CD4-positive, alpha-beta memory T cell (primary cell): ENCODE measurements at regions of chr5 and their contacts with region 1.

Region 1: GRCh38 chr5:149035372-149035790 is 27.5 kb downstream of the SH3TC2 start:
- DNase-seq: peak; percentile 55 to 66 (median 57)
- H3K4me3 ChIP-seq: no peak overlapping the region
- H3K4me3 Mint-ChIP-seq: peak overlapping the region in 1 of 8 donors; percentile 22
- H3K27ac ChIP-seq: no peak overlapping the region
- H3K27ac Mint-ChIP-seq: peak overlapping the region in 1 of 7 donors; percentile 27
- H3K4me1 ChIP-seq: peaks cover 10% of the 10 kb centered on the region
- H3K4me1 Mint-ChIP-seq: peaks cover 3 to 38% (median 19%) of the 10 kb centered on the region in 4 donors
- H3K27me3 ChIP-seq: no peaks in the 10 kb centered on the region
- H3K27me3 Mint-ChIP-seq: peaks cover 0 to 3% of the 10 kb centered on the region in 2 donors

Region 2: DNA sequence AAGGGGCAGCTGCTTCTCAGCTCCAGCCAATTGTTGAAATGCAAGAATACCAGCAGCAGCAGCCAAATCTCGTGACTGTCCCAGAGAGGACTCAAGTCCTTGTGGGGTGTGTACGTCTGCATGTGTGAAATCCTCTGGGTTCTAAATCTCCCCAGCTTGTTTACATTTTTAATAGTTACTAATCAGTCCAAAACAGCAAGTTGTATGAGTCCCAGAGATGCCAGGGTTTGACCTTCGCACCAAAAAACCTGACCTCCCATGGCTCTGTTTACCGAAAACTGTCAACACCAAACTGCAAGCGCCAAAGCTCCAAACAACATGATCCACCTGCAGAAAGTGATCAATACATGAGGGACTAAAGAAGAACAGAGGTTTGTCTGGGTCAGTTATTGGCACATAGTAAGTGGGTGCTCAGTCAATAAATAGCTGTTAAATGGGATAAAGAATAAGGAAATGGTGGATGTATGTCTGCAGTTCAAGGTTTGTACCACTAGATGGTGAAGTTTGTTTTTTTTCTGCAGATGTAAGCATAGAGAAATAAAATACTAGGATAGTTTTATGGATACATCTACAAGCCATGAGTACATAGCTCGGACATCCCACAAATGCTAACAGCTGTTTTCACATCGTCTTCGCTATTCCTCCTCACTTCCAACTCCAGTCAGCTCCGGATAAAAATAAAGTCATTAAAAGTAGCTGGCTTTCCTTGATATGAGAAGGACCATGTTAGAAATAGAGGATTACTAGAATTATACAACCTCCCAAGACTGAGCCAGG is 294.2 kb before region 1 on chr5:
- CTCF ChIA-PET with region 1: interaction called, 400 read pairs
- POLR2A ChIA-PET with region 1: no interaction called
- intact Hi-C with region 1: loop called (anchors 1 kb)
- DNase-seq: peak in 4 of 5 donors; percentile 28 to 35 (median 32)
- H3K4me3 ChIP-seq: no peak overlapping the region
- H3K4me3 Mint-ChIP-seq: no peak overlapping the region
- H3K27ac ChIP-seq: no peak overlapping the region
- H3K27ac Mint-ChIP-seq: no peak overlapping the region
- H3K4me1 ChIP-seq: no peaks in the 10 kb centered on the region
- H3K4me1 Mint-ChIP-seq: no peaks in the 10 kb centered on the region
- H3K27me3 ChIP-seq: no peaks in the 10 kb centered on the region
- H3K27me3 Mint-ChIP-seq: peaks cover 4 to 15% of the 10 kb centered on the region in 2 donors

Region 3: DNA sequence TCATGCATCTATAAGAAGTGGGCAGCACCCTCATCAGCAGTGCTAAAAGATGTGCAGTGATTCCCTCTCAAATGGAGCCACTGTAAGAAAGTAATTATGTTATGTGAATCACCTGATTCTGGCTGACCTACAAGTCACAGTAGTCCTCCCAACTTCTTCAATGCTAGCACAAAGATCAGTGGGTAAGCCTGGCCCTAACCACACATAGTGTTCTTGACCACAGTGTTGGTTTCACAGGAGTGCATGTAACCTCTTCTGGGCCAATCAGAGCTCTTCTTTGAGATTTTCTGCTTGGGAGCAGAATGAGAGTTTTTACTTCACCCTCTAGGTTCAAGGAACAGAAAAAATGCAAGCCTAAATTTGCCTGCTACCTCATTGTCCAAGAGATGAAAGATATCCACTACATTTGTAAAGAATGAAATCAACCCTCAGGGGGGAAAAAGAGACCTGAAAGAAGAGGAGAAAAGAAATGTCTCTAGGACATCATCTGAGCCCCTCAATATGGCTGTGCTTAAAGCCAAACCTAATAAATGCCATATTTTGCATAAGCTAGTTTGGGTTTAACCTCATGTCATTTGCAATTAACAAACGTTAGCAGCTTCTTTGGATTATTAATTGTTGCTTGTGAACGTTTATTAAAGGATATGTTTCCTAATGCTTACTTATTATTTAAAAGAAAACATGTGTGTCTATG is 274.3 kb before region 1 on chr5:
- CTCF ChIA-PET with region 1: no interaction called
- POLR2A ChIA-PET with region 1: no interaction called
- intact Hi-C with region 1: no loop called
- DNase-seq: no peak
- H3K4me3 ChIP-seq: no peak overlapping the region
- H3K4me3 Mint-ChIP-seq: no peak overlapping the region
- H3K27ac ChIP-seq: no peak overlapping the region
- H3K27ac Mint-ChIP-seq: no peak overlapping the region
- H3K4me1 ChIP-seq: no peaks in the 10 kb centered on the region
- H3K4me1 Mint-ChIP-seq: no peaks in the 10 kb centered on the region
- H3K27me3 ChIP-seq: no peaks in the 10 kb centered on the region
- H3K27me3 Mint-ChIP-seq: peaks cover 4 to 7% of the 10 kb centered on the region in 2 donors

Region 4: GRCh38 chr5:149018909-149019443 is 16.4 kb before region 1 on chr5:
- CTCF ChIA-PET with region 1: interaction called, 24 read pairs
- POLR2A ChIA-PET with region 1: no interaction called
- intact Hi-C with region 1: no loop called
- DNase-seq: no peak
- H3K4me3 ChIP-seq: no peak overlapping the region
- H3K4me3 Mint-ChIP-seq: no peak overlapping the region
- H3K27ac ChIP-seq: no peak overlapping the region
- H3K27ac Mint-ChIP-seq: no peak overlapping the region
- H3K4me1 ChIP-seq: no peaks in the 10 kb centered on the region
- H3K4me1 Mint-ChIP-seq: no peaks in the 10 kb centered on the region
- H3K27me3 ChIP-seq: no peaks in the 10 kb centered on the region
- H3K27me3 Mint-ChIP-seq: peaks cover 0 to 8% of the 10 kb centered on the region in 2 donors

Region 5: GRCh38 chr5:149046196-149046829 is 10.9 kb after region 1 on chr5:
- CTCF ChIA-PET with region 1: interaction called, 24 read pairs
- POLR2A ChIA-PET with region 1: no interaction called
- intact Hi-C with region 1: no loop called
- DNase-seq: no peak
- H3K4me3 ChIP-seq: no peak overlapping the region
- H3K4me3 Mint-ChIP-seq: no peak overlapping the region
- H3K27ac ChIP-seq: no peak overlapping the region
- H3K27ac Mint-ChIP-seq: no peak overlapping the region
- H3K4me1 ChIP-seq: no peaks in the 10 kb centered on the region
- H3K4me1 Mint-ChIP-seq: no peaks in the 10 kb centered on the region
- H3K27me3 ChIP-seq: no peaks in the 10 kb centered on the region
- H3K27me3 Mint-ChIP-seq: peaks cover 1 to 7% of the 10 kb centered on the region in 2 donors

Region 6: DNA sequence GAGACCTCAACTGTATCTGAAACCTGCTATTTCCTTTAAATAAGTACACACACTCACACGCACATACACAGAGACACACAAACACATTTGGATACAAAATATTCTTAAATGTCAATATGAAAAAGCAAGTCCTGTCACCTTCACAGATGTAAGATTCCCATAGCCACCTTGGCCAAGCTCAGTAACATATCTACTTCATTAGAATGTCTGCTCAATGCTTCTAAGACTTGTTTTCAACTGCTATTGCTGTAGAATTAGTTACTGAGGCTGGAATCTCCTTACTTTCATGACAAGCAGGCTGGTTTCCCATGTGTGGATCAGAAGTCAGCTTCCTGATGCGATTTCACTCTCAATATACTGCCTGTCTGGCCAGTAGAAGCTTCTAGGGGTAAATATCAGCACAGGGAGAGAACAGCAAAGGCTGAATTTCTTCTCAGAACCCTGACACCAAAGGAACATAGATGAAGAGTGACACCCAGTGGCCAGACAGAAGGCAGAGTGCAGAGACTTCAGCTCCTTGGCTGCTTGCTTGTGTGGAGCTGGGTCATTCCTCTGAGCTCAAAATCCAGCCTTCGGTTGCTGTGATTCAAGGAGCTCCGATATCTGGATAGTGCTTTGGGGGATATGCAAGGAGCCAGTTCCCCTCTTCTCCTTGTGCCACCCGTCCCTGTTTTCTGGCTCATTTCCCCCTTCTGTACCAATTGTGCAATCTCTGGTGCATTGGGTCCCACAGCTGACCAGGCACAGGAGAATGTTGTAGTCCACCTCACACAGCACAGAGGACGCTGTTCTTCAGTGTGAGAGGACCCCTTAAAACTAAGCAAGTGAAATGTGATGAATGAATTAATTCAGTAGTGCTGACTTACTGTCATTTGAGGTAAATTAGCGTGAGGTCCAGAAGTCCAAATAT is 79.3 kb after region 1 on chr5:
- CTCF ChIA-PET with region 1: interaction called, 12 read pairs
- POLR2A ChIA-PET with region 1: no interaction called
- intact Hi-C with region 1: no loop called
- DNase-seq: peak; percentile 35 to 56 (median 43)
- H3K4me3 ChIP-seq: no peak overlapping the region
- H3K4me3 Mint-ChIP-seq: no peak overlapping the region
- H3K27ac ChIP-seq: no peak overlapping the region
- H3K27ac Mint-ChIP-seq: no peak overlapping the region
- H3K4me1 ChIP-seq: no peaks in the 10 kb centered on the region
- H3K4me1 Mint-ChIP-seq: no peaks in the 10 kb centered on the region
- H3K27me3 ChIP-seq: no peaks in the 10 kb centered on the region
- H3K27me3 Mint-ChIP-seq: peaks cover 13 to 14% of the 10 kb centered on the region in 2 donors